Posterior vena cava (tissue), 2 donors: ENCODE measurements at regions of chr3 and their contacts with region 1.

Region 1: GRCh38 chr3:172256101-172256734 is 192.0 kb downstream of the GHSR start:
- DNase-seq: no peak

Region 2: GRCh38 chr3:172201136-172201869 is 54.9 kb before region 1 on chr3:
- intact Hi-C with region 1: loop called (anchors 2 to 10 kb)
- DNase-seq: peak; percentile 94

Region 3: GRCh38 chr3:172317984-172318383 is 61.8 kb after region 1 on chr3:
- intact Hi-C with region 1: no loop called
- DNase-seq: peak; percentile 85